ENCODE measurements at regions of chr2 and their contacts with region 1.

Region 1: DNA sequence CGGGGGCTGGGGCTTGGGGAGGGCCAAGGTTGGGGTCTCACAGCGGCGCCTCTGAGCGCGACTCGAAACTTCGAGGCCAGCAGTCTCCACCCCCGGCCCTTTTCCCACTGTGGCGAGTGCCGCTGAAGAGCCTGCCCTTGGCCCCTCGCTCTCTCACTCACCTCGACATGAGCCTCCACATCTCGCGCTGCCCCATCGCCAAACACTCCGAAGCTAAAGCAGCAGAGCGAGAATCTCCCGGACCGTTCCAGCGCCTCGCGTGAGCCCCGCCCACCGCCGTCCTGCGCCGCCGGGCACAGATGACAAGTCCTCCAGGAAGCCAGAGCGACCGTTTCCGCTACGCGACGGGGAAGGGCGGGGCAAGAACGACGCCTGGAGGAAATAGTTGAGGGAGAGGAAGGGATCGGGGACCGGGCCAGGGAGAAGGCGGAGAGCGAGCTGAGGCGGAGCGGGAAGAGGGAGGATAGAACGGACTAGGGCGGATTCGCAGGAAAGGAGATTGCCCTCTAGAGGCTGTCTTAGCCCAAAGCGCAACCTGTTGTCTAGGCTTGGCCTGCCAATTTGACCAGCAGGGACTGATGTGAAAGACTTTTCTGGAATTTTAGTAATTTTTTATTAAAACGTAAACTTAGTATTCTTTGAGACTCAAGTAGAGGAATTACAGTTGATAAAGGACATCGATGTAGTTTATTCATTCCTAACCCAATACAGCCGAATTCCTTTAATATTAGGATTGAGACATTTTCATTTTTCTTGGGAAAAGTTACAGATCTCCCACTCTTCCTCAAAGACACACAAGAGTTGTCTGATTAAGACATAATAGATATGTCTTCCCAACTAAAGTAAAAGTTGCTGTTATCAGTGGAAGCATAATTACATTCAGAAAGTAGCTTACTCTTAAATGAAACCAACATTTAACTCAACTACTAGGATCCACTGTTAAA is at the start of gene HIBCH:
- DNase-seq: peak; percentile 94
- ATAC-seq: peak; percentile 90
- H3K4me3 Mint-ChIP-seq: peak within 1 kb of the TSS; percentile 81
- H3K27ac Mint-ChIP-seq: peak within 1 kb of the TSS; percentile 88
- H3K4me1 Mint-ChIP-seq: peaks cover 40% of the 10 kb centered on the region
- H3K27me3 Mint-ChIP-seq: no peaks in the 10 kb centered on the region
- CTCF ChIP-seq: peak; percentile 61
- total RNA-seq, gene HIBCH: 17.6 to 19.3 TPM

Region 2: DNA sequence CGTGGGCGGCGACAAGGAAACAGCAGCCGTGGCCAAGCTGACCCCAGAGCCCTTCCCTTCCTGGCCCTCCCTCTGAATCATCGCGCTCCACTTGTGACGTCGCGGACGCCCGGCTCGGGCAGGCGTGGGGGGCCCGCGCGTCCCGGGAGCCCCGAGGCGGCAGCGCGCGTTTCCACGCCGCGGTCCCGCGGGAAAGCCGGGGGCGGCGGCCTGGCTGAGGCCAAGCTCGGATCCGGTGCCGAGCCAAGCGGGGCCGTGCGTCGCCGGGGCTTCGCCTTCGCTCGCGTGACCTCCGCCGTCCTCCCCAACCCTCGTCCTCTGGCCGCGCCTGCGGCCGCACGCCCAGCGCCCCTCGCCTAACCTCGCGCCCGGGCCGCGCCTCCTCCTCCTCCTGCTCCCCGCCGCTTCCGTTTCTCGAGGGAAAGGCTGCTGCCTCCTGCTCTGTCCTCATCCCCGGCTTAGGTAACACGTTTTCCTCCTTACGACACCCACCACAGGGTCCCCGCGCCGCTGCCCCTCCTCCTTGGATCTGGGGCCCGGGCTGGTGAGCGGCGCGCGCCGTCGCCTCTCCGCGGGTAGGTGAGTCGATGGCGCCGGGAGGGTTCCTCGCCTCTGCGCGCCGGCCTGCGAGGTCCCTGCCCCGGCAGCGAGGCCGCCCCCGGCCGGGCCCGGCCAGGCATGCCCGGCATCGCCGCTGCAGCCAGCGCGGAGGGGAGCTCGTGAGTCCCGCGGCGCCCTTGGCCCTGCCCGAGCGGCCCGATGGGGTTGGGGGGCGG is 23.9 kb after region 1 on chr2 and contains the start of gene INPP1:
- CTCF ChIA-PET with region 1: interaction called, 13 read pairs
- POLR2A ChIA-PET with region 1: interaction called, 13 read pairs
- intact Hi-C with region 1: no loop called
- DNase-seq: peak; percentile 65
- ATAC-seq: peak; percentile 70
- H3K4me3 Mint-ChIP-seq: peak within 1 kb of the TSS; percentile 76
- H3K27ac Mint-ChIP-seq: peak within 1 kb of the TSS; percentile 87
- H3K4me1 Mint-ChIP-seq: peaks cover 17% of the 10 kb centered on the region
- H3K27me3 Mint-ChIP-seq: peaks cover 1% of the 10 kb centered on the region
- CTCF ChIP-seq: no peak
- total RNA-seq, gene INPP1: 8.5 to 10.2 TPM

Measured in activated CD8-positive, alpha-beta T cell treated with anti-CD3 and anti-CD28 coated beads for 36 hours (primary cell).